ENCODE measurements at regions of chr10 and their contacts with region 1.

Region 1: DNA sequence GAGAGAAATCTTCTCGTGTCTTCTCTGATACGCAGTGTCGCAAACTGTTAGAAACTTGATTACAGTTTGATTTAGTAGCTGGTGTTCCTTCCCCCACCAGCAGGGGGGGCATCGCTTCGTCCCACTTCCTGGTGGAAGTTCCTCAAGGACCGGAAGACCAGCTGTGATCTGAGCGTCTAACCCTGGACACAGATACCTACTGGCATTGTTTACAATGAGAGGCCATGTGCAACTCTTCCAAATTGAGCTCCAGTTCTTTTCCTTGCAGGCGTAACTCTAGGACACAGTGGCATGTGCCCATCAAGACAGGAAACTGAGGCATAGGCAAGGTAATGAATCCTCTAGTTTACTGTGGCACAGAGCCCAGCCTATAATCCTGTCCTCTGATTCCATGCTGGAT is 219.0 kb downstream of the CCDC3 start:
- DNase-seq: peak; percentile 49
- ATAC-seq: no peak
- H3K4me3 Mint-ChIP-seq: no peak overlapping the region
- H3K27ac Mint-ChIP-seq: no peak overlapping the region
- H3K4me1 Mint-ChIP-seq: peaks cover 20% of the 10 kb centered on the region
- H3K27me3 Mint-ChIP-seq: no peaks in the 10 kb centered on the region
- CTCF ChIP-seq: peak; percentile 90

Region 2: GRCh38 chr10:12484002-12484918 is 298.3 kb before region 1 on chr10:
- CTCF ChIA-PET with region 1: no interaction called
- POLR2A ChIA-PET with region 1: no interaction called
- intact Hi-C with region 1: no loop called
- DNase-seq: no peak
- ATAC-seq: no peak
- H3K4me3 Mint-ChIP-seq: no peak overlapping the region
- H3K27ac Mint-ChIP-seq: no peak overlapping the region
- H3K4me1 Mint-ChIP-seq: peaks cover 21% of the 10 kb centered on the region
- H3K27me3 Mint-ChIP-seq: no peaks in the 10 kb centered on the region
- CTCF ChIP-seq: no peak

Region 3: GRCh38 chr10:12690525-12691126 is 91.9 kb before region 1 on chr10:
- CTCF ChIA-PET with region 1: no interaction called
- POLR2A ChIA-PET with region 1: no interaction called
- intact Hi-C with region 1: no loop called
- DNase-seq: peak; percentile 29
- ATAC-seq: peak; percentile 53
- H3K4me3 Mint-ChIP-seq: no peak overlapping the region
- H3K27ac Mint-ChIP-seq: peak overlapping the region; percentile 60
- H3K4me1 Mint-ChIP-seq: peaks cover 4% of the 10 kb centered on the region
- H3K27me3 Mint-ChIP-seq: no peaks in the 10 kb centered on the region
- CTCF ChIP-seq: no peak

Region 4: GRCh38 chr10:12766223-12766622 is 16.3 kb before region 1 on chr10:
- CTCF ChIA-PET with region 1: interaction called, 10 read pairs
- POLR2A ChIA-PET with region 1: interaction called, 3 read pairs
- intact Hi-C with region 1: no loop called
- DNase-seq: no peak
- ATAC-seq: no peak
- H3K4me3 Mint-ChIP-seq: no peak overlapping the region
- H3K27ac Mint-ChIP-seq: no peak overlapping the region
- H3K4me1 Mint-ChIP-seq: no peaks in the 10 kb centered on the region
- H3K27me3 Mint-ChIP-seq: no peaks in the 10 kb centered on the region
- CTCF ChIP-seq: no peak

Region 5: DNA sequence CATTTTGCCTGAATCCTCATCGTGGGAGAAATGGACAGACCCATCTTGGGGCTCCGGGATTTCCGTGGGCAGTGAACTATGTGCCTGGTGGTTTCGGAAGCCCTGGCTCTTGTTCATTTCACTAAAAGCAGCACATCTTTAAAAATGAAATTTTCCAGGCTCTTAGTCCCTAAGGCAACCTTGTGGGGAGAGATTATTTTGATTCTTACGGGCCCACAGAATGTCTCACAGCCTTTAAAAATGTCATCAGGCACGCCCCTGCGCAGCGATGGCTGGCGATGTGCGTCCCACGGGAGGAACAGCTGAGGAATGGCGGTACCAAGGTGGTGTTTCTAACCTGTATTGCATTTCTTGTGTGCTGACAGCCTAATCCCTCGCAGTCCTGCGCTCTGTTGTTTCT is 29.3 kb after region 1 on chr10:
- CTCF ChIA-PET with region 1: interaction called, 10 read pairs
- POLR2A ChIA-PET with region 1: no interaction called
- intact Hi-C with region 1: no loop called
- DNase-seq: no peak
- ATAC-seq: no peak
- H3K4me3 Mint-ChIP-seq: no peak overlapping the region
- H3K27ac Mint-ChIP-seq: no peak overlapping the region
- H3K4me1 Mint-ChIP-seq: no peaks in the 10 kb centered on the region
- H3K27me3 Mint-ChIP-seq: no peaks in the 10 kb centered on the region
- CTCF ChIP-seq: no peak

Region 6: GRCh38 chr10:12902135-12902572 is 119.6 kb after region 1 on chr10:
- CTCF ChIA-PET with region 1: interaction called, 14 read pairs
- POLR2A ChIA-PET with region 1: no interaction called
- intact Hi-C with region 1: no loop called
- DNase-seq: peak; percentile 75
- ATAC-seq: peak; percentile 37
- H3K4me3 Mint-ChIP-seq: no peak overlapping the region
- H3K27ac Mint-ChIP-seq: no peak overlapping the region
- H3K4me1 Mint-ChIP-seq: no peaks in the 10 kb centered on the region
- H3K27me3 Mint-ChIP-seq: peaks cover 8% of the 10 kb centered on the region
- CTCF ChIP-seq: peak; percentile 87